Mammary epithelial cell (primary cell): ENCODE measurements at regions of chr1 and their contacts with region 1.

Region 1: GRCh38 chr1:23403735-23404486 is 20.6 kb downstream of the TCEA3 start:
- DNase-seq: peak; percentile 100
- H3K4me3 ChIP-seq: peak overlapping the region in 2 of 3 experiments; percentile 4 to 21
- H3K27ac ChIP-seq: peak overlapping the region; percentile 85
- H3K4me1 ChIP-seq: peaks cover 20% of the 10 kb centered on the region
- H3K27me3 ChIP-seq: no peaks in the 10 kb centered on the region
- CTCF ChIP-seq: peak; percentile 97 to 98

Region 2: GRCh38 chr1:23168457-23169194 is 235.3 kb before region 1 on chr1 and contains the start of gene LUZP1:
- CTCF ChIA-PET with region 1: no interaction called
- dilution Hi-C with region 1: no loop called
- in situ Hi-C with region 1: no loop called
- intact Hi-C with region 1: loop called (anchors 2 kb)
- DNase-seq: peak; percentile 80
- H3K4me3 ChIP-seq: peak within 1 kb of the TSS; percentile 66 to 99 (median 85)
- H3K27ac ChIP-seq: peak within 1 kb of the TSS; percentile 94
- H3K4me1 ChIP-seq: peaks cover 42% of the 10 kb centered on the region
- H3K27me3 ChIP-seq: no peaks in the 10 kb centered on the region
- CTCF ChIP-seq: no peak
- total RNA-seq, gene LUZP1: 55.2 to 83.2 TPM

Region 3: DNA sequence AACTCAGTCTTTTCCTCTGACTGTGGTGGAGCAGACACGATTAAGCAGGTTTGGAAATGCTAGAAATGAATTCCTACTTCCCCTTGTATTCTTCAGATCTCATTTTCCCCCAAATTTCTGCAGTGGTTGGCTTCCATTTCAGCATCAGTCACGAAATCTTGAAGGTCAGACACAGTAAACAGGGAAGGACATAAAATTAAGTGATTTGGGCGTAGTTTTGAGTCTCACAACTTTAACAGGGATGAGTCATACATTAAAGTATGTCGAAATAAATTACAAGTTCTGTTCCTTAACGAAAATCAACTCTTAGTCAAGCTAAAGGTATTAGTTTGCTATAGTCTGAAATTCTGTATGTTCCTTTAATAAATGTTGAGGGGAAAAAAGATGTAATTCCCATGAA is 121.0 kb before region 1 on chr1:
- CTCF ChIA-PET with region 1: no interaction called
- dilution Hi-C with region 1: no loop called
- in situ Hi-C with region 1: no loop called
- intact Hi-C with region 1: loop called (anchors 2 kb)
- DNase-seq: peak; percentile 57
- H3K4me3 ChIP-seq: no peak overlapping the region
- H3K27ac ChIP-seq: peak overlapping the region; percentile 16
- H3K4me1 ChIP-seq: peaks cover 19% of the 10 kb centered on the region
- H3K27me3 ChIP-seq: no peaks in the 10 kb centered on the region
- CTCF ChIP-seq: no peak

Region 4: DNA sequence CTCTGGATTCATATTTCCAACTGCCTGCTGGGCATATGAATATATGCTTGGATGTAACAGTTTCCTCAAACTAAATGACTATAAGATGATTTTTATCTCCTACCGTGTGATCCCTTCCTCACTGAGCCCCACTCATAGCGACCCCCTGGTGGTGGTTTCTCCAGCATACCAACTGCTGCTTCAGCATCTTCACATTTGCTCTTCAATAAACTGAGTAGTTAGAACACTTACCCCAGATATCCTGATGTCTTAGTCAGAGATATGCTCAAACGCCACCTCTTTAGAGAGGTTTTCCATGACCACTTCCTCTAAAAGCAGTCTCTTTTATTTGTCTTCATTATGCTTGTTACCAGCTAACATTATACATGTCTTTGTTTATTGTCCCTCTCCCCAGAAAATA is 49.7 kb before region 1 on chr1:
- CTCF ChIA-PET with region 1: no interaction called
- dilution Hi-C with region 1: no loop called
- in situ Hi-C with region 1: loop called in 1 of 2 experiments (anchors 10 kb)
- intact Hi-C with region 1: no loop called
- DNase-seq: no peak
- H3K4me3 ChIP-seq: no peak overlapping the region
- H3K27ac ChIP-seq: no peak overlapping the region
- H3K4me1 ChIP-seq: no peaks in the 10 kb centered on the region
- H3K27me3 ChIP-seq: no peaks in the 10 kb centered on the region
- CTCF ChIP-seq: no peak

Region 5: DNA sequence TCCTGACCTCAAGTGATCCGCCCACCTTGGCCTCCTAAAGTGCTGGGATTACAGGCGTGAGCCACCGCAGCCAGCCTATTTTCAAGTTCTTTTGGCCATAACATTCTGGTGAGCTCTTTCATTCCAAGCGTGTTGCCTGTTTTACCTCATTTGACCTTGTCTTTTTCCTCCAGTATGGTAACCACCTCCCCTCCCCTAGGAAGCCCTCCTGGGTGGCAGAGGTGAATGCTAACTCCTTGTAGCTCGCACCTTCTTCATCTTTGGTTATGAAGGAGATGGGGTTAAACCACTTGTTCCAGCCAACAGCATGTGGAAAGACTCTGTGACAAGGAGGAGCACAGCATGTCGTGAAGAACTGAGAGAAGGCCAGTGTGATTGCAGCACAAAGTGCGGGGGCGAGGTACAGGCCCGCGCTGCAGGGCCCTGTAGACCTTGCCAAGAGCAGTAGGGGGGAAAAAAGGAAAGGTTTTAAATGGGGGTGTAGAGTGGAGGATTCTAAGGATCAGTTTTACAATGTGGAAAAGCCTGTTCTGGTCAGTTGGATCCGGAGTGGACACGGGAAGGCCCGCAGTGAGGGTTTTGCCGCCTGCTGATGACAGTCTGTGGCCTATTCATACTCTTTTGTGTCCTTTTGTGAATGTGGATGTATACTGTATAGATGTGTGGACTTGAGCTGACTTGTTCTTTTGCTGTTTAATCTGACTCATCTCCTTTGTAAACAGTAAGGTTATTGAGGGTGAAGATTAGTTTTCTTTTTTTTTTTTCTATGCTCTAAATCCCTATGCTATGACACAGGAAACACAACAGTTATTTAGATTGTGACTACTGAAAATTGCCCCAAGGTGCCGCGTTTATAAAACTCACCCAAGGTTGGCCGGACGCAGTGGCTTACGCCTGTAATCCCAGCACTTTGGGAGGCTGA is 26.8 kb before region 1 on chr1:
- CTCF ChIA-PET with region 1: interaction called, 3 read pairs
- dilution Hi-C with region 1: no loop called
- in situ Hi-C with region 1: no loop called
- intact Hi-C with region 1: loop called (anchors 1 kb)
- DNase-seq: peak; percentile 96
- H3K4me3 ChIP-seq: no peak overlapping the region
- H3K27ac ChIP-seq: peak overlapping the region; percentile 78
- H3K4me1 ChIP-seq: peaks cover 15% of the 10 kb centered on the region
- H3K27me3 ChIP-seq: no peaks in the 10 kb centered on the region
- CTCF ChIP-seq: no peak

Region 6: GRCh38 chr1:23459338-23459757 is 55.4 kb after region 1 on chr1:
- CTCF ChIA-PET with region 1: no interaction called
- dilution Hi-C with region 1: no loop called
- in situ Hi-C with region 1: no loop called
- intact Hi-C with region 1: no loop called
- DNase-seq: no peak
- H3K4me3 ChIP-seq: no peak overlapping the region
- H3K27ac ChIP-seq: no peak overlapping the region
- H3K4me1 ChIP-seq: peaks cover 27% of the 10 kb centered on the region
- H3K27me3 ChIP-seq: no peaks in the 10 kb centered on the region
- CTCF ChIP-seq: no peak

Region 7: GRCh38 chr1:23484253-23485001 is 80.5 kb after region 1 on chr1:
- CTCF ChIA-PET with region 1: no interaction called
- dilution Hi-C with region 1: no loop called
- in situ Hi-C with region 1: no loop called
- intact Hi-C with region 1: loop called (anchors 5 kb)
- DNase-seq: peak; percentile 88
- H3K4me3 ChIP-seq: peak overlapping the region; percentile 23 to 83 (median 68)
- H3K27ac ChIP-seq: peak overlapping the region; percentile 29
- H3K4me1 ChIP-seq: peaks cover 9% of the 10 kb centered on the region
- H3K27me3 ChIP-seq: no peaks in the 10 kb centered on the region
- CTCF ChIP-seq: no peak

Region 8: DNA sequence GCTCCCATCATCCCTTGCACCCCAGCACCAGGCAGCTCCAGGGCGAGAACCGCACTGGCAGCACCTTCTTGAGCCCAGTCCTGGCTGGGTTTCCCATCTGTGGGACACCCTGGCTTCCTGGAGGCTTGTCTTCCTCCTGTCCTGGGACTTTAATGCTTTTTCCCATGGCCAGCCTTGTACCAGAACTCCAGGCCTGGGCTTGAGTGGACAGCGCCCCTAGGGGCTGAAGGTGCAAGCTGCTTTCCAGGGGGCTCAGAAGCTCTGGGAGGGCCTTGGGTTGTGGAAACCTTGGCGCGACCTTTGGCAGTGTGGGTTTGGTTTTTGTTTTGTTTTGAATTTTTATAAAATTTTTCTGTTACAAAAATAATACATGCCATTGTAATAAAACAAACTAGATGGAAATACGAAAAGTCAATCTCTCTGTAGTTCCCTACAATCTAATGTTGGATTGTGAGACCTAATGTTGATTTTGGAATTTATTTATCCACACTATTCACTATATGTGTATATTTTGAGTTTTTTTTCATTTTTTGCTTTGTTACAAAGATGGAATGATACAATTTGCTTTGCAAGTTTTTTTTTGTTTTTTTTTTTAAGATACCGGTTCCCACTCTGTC is 253.9 kb after region 1 on chr1:
- CTCF ChIA-PET with region 1: no interaction called
- dilution Hi-C with region 1: no loop called
- in situ Hi-C with region 1: no loop called
- intact Hi-C with region 1: no loop called
- DNase-seq: peak; percentile 11
- H3K4me3 ChIP-seq: no peak overlapping the region
- H3K27ac ChIP-seq: no peak overlapping the region
- H3K4me1 ChIP-seq: peaks cover 12% of the 10 kb centered on the region
- H3K27me3 ChIP-seq: no peaks in the 10 kb centered on the region
- CTCF ChIP-seq: peak; percentile 80 to 90